Right cardiac atrium (tissue), 5 donors: ENCODE measurements at regions of chr14 and their contacts with region 1.

Region 1: GRCh38 chr14:69879175-69880043 is at the start of gene SMOC1:
- DNase-seq: peak; percentile 77 to 87 (median 81)
- ATAC-seq: peak; percentile 86 to 97
- H3K4me3 ChIP-seq: peak within 1 kb of the TSS; percentile 11
- H3K27ac ChIP-seq: no peak within 1 kb of the TSS
- H3K4me1 ChIP-seq: no peaks in the 10 kb centered on the region
- H3K27me3 ChIP-seq: peaks cover 3% of the 10 kb centered on the region
- total RNA-seq, gene SMOC1: 18.3 to 37.0 (median 23.7) TPM

Region 2: DNA sequence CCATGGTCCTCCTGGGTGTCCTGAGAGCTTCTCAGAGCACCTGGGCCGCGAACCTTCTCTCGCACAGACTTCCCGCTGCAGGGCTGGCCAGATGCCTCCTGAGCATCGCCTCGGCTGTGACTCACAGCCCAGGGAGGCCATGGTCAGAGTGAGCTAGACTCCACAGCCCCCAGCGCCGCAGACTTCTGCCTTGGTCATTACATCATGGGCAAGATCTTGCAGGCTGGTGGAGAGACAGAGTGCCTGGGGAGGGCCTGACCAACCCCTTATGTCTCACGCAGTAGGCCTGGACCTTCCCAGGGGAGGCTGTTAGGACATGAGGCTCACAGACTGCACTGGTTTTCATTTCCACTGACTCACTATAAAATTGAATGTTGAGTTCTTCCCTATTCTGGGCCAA is 41.6 kb after region 1 on chr14:
- intact Hi-C with region 1: no loop called
- DNase-seq: no peak
- ATAC-seq: no peak
- H3K4me3 ChIP-seq: no peak overlapping the region
- H3K27ac ChIP-seq: no peak overlapping the region
- H3K4me1 ChIP-seq: no peaks in the 10 kb centered on the region
- H3K27me3 ChIP-seq: no peaks in the 10 kb centered on the region

Region 3: GRCh38 chr14:69931960-69932359 is 52.6 kb after region 1 on chr14:
- intact Hi-C with region 1: no loop called
- DNase-seq: no peak
- ATAC-seq: no peak
- H3K4me3 ChIP-seq: no peak overlapping the region
- H3K27ac ChIP-seq: no peak overlapping the region
- H3K4me1 ChIP-seq: no peaks in the 10 kb centered on the region
- H3K27me3 ChIP-seq: no peaks in the 10 kb centered on the region

Region 4: GRCh38 chr14:70013269-70013873 is 134.0 kb after region 1 on chr14:
- intact Hi-C with region 1: loop called in 2 of 4 experiments (anchors 10 kb)
- DNase-seq: peak in 1 of 3 donors; percentile 61
- ATAC-seq: no peak
- H3K4me3 ChIP-seq: no peak overlapping the region
- H3K27ac ChIP-seq: no peak overlapping the region
- H3K4me1 ChIP-seq: no peaks in the 10 kb centered on the region
- H3K27me3 ChIP-seq: no peaks in the 10 kb centered on the region